Heart left ventricle (tissue), 16 donors: ENCODE measurements at regions of chr12 and their contacts with region 1.

Region 1: DNA sequence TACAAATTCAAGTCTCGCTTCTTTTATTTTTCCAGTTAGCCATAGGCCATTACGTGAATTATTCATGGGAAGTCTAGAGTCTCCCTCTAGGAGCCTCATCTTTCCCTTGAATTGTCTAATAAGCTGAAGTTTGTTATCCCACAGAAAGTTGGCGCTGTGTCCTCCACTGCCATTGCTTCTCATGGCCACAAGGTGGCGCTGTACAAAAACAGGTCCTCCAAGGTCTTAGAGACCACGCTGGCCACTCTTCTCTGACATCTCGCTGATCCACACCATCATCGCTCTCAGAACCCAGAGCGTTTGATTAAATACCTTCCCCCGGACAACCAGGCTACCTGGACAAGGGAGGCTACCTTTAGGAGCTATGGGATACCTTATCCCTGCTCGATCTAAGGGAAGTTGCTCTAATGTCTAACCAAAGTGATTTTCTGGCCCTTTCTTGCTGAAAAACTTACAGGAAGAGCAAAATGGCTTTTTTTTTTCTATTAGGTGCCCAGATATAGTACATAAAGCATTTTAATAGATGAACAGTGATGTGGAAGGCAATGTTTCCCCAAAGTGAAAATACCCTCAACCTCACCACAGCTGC is 110.0 kb downstream of the CCDC60 start:
- DNase-seq: peak in 4 of 5 donors; percentile 12 to 32 (median 24)
- ATAC-seq: peak in 1 of 4 donors; percentile 36
- H3K4me3 ChIP-seq: no peak overlapping the region
- H3K27ac ChIP-seq: no peak overlapping the region
- H3K4me1 ChIP-seq: no peaks in the 10 kb centered on the region
- H3K27me3 ChIP-seq: peaks cover 0 to 4% (median 0%) of the 10 kb centered on the region in 9 donors
- CTCF ChIP-seq: peak; percentile 59 to 92 (median 76)
- POLR2A ChIP-seq: no peak

Region 2: GRCh38 chr12:119505001-119505400 is 60.5 kb after region 1 on chr12:
- intact Hi-C with region 1: no loop called
- DNase-seq: no peak
- ATAC-seq: no peak
- H3K4me3 ChIP-seq: no peak overlapping the region
- H3K27ac ChIP-seq: no peak overlapping the region
- H3K4me1 ChIP-seq: no peaks in the 10 kb centered on the region
- H3K27me3 ChIP-seq: peaks cover 0 to 14% (median 0%) of the 10 kb centered on the region in 9 donors
- CTCF ChIP-seq: no peak
- POLR2A ChIP-seq: no peak

Region 3: DNA sequence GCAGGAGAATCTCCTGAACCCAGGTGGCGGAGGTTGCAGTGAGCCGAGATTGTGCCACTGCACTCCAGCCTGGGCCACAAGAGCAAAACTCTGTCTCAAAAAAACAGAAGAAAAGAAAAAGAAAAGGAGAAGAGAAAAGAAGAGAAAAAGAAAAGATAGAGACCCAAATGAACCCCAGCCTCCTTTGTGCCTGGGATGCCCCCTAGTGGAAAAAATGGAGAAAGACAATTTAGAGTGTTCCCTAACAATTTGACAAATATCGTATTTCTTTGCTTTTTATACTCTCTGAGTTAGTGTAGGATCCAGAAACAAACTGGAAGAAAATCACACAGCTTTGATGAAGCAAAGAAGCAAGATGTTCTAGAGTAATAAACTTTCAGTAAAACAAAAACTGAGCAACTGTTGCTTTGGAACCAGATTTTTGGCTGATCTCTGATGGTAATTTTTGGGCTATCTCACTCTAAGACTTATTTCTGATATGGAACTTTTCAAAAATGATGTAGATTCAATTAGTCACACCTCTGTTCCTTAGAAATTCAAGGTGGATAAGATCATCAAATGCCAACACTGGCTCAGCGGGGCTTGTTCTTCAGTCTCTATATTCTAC is 204.8 kb after region 1 on chr12:
- intact Hi-C with region 1: loop called in 3 of 10 experiments (anchors 10 kb)
- DNase-seq: no peak
- ATAC-seq: no peak
- H3K4me3 ChIP-seq: no peak overlapping the region
- H3K27ac ChIP-seq: no peak overlapping the region
- H3K4me1 ChIP-seq: no peaks in the 10 kb centered on the region
- H3K27me3 ChIP-seq: no peaks in the 10 kb centered on the region
- CTCF ChIP-seq: peak; percentile 46 to 81 (median 68)
- POLR2A ChIP-seq: no peak

Region 4: DNA sequence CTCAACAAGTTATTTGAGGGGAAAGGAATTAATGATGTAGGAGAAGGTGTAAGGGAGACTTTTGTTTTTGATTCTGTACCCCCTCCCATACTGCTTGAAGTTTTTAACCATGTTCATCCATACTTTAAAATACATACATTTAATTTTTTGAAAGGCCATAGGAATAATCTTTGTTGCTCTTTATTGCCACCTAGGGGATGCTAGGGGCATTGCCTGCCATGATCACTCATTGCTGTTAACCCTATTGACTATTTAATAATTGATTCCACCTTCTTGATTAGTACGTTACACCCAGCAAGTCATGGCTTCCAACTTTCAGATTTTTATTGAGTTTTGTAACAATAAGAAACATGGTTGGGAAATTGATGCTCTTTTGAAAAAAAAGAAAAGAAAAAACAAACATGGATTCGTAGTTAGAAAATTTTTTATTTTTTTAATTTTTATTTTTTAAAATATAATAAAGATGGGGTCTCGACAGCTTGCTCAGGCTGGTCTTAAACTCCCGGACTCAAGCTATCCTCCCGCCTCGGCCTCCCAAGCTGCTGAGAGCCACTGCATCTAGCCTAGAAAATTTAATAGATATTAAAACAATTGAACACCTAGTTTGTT is 214.8 kb after region 1 on chr12:
- intact Hi-C with region 1: loop called in 2 of 10 experiments (anchors 5 kb)
- DNase-seq: no peak
- ATAC-seq: no peak
- H3K4me3 ChIP-seq: no peak overlapping the region
- H3K27ac ChIP-seq: no peak overlapping the region
- H3K4me1 ChIP-seq: no peaks in the 10 kb centered on the region
- H3K27me3 ChIP-seq: no peaks in the 10 kb centered on the region
- CTCF ChIP-seq: peak; percentile 85 to 98 (median 90)
- POLR2A ChIP-seq: no peak